BJ (cell line): ENCODE measurements at regions of chr11 and their contacts with region 1.

Region 1: GRCh38 chr11:127843483-127844396 is 743.6 kb downstream of the ETS1 start:
- DNase-seq: no peak
- H3K4me3 ChIP-seq: no peak overlapping the region
- H3K27me3 ChIP-seq: no peaks in the 10 kb centered on the region; the same call in 1 of the 2 replicates
- CTCF ChIP-seq: peak; percentile 79

Region 2: DNA sequence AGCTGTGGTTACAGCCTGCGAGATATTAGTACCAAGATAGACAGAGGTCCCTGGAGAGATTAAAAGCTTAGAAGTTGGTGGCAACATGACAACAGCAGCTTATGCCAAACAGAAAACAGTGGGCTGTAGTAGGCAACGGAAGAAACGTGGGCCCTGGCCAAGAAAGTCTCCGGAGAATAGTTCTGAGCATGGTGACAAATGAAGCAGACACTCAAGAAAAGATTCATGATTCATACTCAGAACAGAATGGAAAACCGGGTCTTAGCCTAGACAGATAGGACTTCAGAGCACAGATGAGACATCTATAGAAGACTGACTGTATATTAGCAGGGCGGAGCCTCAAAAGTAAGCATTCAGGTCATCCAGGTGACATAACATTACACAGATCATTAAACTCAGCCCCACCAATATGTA is 16.2 kb after region 1 on chr11:
- CTCF ChIA-PET with region 1: interaction called, 12 read pairs
- POLR2A ChIA-PET with region 1: no interaction called
- DNase-seq: no peak
- H3K4me3 ChIP-seq: no peak overlapping the region
- H3K27me3 ChIP-seq: no peaks in the 10 kb centered on the region
- CTCF ChIP-seq: no peak

Region 3: DNA sequence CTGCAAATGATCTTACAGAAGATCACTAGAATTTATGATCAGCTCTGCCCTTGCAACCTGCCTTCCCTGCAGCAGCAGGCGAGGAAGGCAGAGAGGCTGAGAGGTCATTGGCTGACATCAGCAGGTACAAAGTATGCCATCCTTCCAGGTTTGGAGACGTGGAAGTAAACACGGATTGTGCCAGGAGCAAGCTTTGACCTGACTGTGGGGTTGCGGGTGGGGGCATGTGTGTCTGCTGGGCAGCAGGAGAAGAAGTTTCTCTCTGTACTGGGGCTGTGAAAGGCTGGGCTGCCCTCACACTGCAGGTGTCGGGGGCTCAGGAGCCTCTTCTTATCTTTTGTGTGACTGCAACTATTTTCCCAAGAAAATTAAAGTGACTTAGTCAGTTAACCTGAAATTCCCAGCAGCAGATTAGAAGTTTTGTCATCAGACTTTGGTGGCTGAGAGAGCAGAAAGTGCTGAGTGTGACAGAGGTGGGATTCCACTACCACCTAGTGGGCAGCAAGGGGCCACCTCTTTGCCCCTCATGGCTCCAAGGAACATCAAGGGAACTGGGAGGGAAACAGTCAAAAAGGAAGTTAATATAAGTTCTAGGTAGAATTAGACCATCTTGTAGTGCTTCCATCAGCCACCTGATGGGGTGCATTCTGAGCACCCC is 177.7 kb after region 1 on chr11:
- CTCF ChIA-PET with region 1: interaction called, 76 read pairs
- POLR2A ChIA-PET with region 1: no interaction called
- DNase-seq: no peak
- H3K4me3 ChIP-seq: no peak overlapping the region
- H3K27me3 ChIP-seq: no peaks in the 10 kb centered on the region
- CTCF ChIP-seq: peak; percentile 68

Region 4: DNA sequence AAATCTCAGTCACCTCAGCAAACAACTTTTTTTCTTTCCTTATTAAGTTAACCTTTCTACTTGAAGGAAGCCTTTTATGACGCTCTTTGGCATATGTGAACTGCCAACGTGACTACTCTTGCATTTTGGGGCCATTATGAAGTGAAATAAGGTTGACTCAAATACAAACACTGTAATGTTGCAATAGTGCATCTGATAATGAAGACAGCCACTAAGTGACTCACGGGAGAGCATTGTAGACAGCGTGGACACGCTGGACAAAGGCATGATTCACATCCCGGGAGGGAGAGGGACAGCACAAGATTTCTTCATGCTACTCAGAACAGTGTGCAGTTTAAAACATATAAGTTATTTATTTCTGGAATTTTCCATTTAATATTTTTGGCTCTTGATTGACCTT is 182.9 kb after region 1 on chr11:
- CTCF ChIA-PET with region 1: interaction called, 76 read pairs
- POLR2A ChIA-PET with region 1: no interaction called
- DNase-seq: peak; percentile 99
- H3K4me3 ChIP-seq: no peak overlapping the region
- H3K27me3 ChIP-seq: no peaks in the 10 kb centered on the region
- CTCF ChIP-seq: no peak